Dendritic cell treated with granulocyte-macrophage colony-stimulating factor and Interleukin-4, amounts not matched to agents 40 ng/mL and 50 ng/mL, for 4 days (primary cell): ENCODE measurements at regions of chr2 and their contacts with region 1.

Region 1: GRCh38 chr2:176419591-176420071 is 150.4 kb downstream of the MTX2 start:
- H3K4me3 Mint-ChIP-seq: no peak overlapping the region
- H3K27ac Mint-ChIP-seq: no peak overlapping the region
- H3K4me1 Mint-ChIP-seq: no peaks in the 10 kb centered on the region
- H3K27me3 Mint-ChIP-seq: peaks cover 2% of the 10 kb centered on the region

Region 2: DNA sequence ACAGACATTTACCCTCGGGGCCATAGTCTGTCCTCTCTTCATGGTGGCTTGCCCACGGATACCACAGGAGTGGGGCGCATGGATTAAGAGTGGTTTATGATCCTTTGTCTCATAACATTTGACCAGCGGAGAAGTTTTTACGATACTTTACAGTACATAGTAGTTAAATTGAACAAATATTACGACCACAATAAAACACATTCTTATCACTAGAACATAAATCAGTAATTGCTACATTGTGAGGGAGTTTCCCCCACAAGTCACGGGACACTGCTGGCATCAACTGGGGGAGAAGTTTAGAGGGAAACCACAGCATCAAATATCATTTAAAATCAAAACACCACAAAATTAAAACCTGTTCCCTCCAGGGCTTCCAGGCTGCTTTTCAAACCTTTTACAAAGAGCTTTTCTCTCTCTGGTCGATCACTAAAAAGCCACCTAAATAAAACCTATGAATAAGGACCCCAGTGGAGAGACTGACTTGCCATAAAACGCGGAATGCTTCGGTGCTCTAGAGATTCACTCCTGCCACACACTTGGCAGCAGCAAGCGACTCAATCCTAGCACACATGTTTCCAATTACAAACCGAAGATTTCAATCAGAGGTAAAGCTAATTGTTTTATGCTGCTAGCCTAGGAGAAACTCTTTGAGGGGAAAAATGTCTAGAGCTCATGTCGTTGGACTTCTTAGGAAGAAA is 619.3 kb after region 1 on chr2:
- intact Hi-C with region 1: loop called (anchors 5 kb)
- H3K4me3 Mint-ChIP-seq: no peak overlapping the region
- H3K27ac Mint-ChIP-seq: no peak overlapping the region
- H3K4me1 Mint-ChIP-seq: no peaks in the 10 kb centered on the region
- H3K27me3 Mint-ChIP-seq: no peaks in the 10 kb centered on the region